PC-9 (cell line): ENCODE measurements at regions of chr20 and their contacts with region 1.

Region 1: DNA sequence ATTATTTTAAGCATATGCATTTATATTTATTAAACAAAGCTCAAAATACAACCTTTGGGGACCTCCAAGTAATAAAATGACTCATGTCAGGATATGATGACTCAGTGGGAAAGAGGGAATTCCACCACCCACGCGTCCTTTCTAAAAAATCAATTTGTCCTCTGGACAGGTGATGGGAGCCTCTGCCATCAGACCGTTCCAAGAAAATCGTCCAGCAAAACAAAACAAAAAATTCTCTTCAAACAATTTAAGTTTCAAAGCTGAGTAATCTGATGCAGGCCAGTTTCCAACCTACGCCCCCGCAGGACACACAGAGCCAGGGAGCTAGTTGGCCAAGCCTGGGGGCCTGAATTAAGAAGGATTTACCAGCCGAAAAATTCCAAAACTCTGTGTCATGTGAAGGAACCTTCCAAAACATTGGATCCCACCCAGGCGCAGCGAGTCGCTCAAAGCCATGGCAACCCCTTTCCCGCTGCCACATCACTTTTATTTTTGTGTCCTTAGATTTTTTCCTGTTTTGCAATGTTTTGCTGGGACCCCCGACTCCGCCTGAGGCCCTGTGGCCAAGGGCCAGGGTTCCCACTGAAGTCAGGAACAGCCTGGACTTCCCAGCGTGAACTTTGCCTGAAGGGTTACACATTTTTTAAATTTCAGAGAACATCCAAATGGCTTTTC is 95.3 kb downstream of the NFATC2 start:
- DNase-seq: peak; percentile 78 to 93
- H3K4me3 ChIP-seq: peak overlapping the region; percentile 16; the same call in 1 of the 2 replicates
- H3K27ac ChIP-seq: peak overlapping the region; percentile 76
- H3K4me1 ChIP-seq: peaks cover 28% of the 10 kb centered on the region
- H3K27me3 ChIP-seq: no peaks in the 10 kb centered on the region
- CTCF ChIP-seq: 0 out of 2 replicates have a peak, but pooled peaks have one; percentile 16

Region 2: DNA sequence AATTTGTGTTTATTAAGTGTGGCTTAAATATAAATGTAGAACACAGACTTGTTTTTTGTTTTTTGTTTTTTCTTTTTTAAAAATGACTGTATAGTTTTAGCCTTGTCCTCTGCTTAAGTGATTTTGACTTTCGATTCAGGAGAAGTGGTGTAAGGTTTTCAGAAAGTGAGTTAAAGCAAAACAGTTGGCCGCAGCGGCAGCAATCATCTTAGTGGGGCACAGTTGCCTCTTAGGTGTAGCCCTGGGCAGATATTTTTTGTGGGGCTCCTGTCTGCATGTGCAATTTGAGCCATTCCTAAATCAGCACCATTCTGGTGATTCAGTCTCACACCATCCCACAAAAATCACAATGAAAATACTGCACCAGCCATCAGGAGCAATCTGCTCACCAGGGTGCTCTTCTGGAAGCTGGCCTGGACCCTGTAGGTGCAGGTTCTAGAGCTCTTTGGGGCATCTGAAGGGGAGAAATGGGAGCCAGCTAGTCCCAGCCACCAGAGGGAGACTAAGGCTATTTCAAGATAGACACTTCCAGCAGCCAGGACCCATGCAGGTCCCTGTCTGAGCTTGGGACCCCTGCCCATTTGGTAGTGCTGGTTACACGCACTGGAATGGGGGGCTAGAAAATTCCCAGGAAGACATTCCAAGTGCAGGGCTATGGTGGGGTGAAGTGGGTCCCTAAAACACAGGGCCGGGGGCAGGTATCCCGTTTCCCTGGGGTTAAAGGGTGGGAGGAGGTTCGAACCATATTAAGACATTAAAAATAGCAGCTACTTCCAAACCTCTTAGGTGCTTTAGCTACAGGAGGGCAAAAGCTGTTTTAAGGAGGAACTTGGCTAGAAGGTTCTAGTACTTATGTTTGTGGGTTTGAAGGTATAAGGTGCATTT is 61.3 kb before region 1 on chr20:
- CTCF ChIA-PET with region 1: no interaction called
- POLR2A ChIA-PET with region 1: no interaction called
- intact Hi-C with region 1: loop called (anchors 1 kb)
- DNase-seq: peak in 1 of 2 experiments; percentile 16
- H3K4me3 ChIP-seq: no peak overlapping the region
- H3K27ac ChIP-seq: no peak overlapping the region
- H3K4me1 ChIP-seq: peaks cover 21% of the 10 kb centered on the region
- H3K27me3 ChIP-seq: no peaks in the 10 kb centered on the region
- CTCF ChIP-seq: peak; percentile 73